ENCODE measurements at regions of chr5 and their contacts with region 1.

Region 1: GRCh38 chr5:36264202-36264760 is 22.6 kb upstream of the NADK2 start:
- DNase-seq: no peak
- ATAC-seq: no peak

Region 2: DNA sequence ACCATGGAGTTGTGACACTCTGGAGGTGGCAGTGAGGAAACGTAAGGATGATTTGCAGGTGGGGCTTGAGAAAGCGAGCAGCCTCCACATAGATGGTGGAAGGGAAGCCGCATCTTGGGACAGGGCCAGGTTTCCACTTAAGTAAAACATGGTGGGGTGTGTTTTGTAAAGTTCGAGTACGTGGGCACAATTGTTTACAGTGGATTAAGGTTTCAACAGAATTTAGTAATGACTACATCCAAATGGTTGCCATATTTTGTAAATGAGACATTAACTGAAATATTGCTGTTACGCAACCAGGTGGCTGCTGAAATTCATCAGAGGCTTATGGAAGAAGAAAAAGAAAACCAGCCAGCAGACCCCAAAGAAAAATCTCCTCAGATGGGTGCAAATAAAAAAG is 493.0 kb before region 1 on chr5:
- intact Hi-C with region 1: no loop called
- DNase-seq: no peak
- ATAC-seq: no peak

Region 3: DNA sequence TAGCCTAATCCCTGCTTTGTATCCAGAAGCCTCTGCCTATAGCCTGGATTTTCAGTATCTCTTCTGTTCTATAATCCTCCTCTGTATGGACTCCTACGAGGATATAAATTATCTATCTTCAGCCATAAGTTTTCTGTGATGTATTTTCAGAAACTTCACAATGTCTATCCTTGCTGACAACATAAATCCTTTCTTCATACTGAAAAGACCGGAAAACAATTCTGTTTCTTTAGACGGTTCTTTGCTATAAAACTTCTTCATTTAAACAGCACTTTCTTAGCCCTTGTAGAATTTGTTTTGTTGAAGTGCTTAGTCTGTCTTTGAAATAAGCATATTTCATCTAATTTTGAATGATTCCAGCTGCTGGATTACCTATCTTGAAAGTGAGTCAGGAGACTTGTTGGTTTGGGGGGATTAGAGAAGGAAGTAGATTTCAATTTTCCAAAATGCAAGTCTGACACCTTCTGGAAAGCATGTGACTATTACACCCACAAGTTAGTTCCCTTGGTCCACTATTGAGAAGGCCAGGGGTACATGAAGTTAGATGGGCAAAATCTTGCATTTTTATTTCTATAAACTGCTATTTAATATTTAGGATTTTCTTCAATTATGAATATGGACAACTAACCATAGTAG is 133.7 kb after region 1 on chr5:
- intact Hi-C with region 1: loop called (anchors 10 kb)
- DNase-seq: no peak
- ATAC-seq: peak; percentile 57

Region 4: DNA sequence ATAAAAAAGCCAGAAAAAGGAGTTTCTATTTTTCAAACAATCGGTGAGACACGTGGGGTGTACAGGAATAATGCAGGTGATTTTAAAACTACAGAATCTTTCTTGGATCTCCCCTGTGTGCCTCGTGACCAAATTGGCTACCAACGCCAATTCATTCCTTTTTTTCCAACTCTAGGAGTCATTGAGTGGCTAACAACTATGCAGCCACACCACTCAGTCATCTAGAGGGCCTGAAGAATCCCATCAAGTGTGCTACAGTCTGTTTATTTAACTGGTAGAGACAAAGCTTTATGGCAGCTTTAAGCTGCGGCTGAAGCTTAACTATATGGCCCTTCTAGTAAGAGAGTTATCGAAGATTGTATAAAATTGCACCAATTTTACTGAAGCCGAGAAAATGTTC is 499.2 kb after region 1 on chr5:
- intact Hi-C with region 1: no loop called
- DNase-seq: no peak
- ATAC-seq: no peak

Measured in left ventricle myocardium superior (tissue), 1 donor.